ENCODE measurements at regions of chr5 and their contacts with region 1.

Region 1: GRCh38 chr5:90434116-90434714 is 24.7 kb upstream of the CETN3 start:
- DNase-seq: peak; percentile 6 to 63 (median 20)
- H3K4me3 ChIP-seq: no peak overlapping the region
- H3K4me3 Mint-ChIP-seq: no peak overlapping the region
- H3K27ac ChIP-seq: no peak overlapping the region
- H3K27ac Mint-ChIP-seq: no peak overlapping the region
- H3K4me1 ChIP-seq: no peaks in the 10 kb centered on the region
- H3K4me1 Mint-ChIP-seq: no peaks in the 10 kb centered on the region
- H3K27me3 ChIP-seq: no peaks in the 10 kb centered on the region
- H3K27me3 Mint-ChIP-seq: peaks cover 2 to 16% of the 10 kb centered on the region in 2 donors

Region 2: DNA sequence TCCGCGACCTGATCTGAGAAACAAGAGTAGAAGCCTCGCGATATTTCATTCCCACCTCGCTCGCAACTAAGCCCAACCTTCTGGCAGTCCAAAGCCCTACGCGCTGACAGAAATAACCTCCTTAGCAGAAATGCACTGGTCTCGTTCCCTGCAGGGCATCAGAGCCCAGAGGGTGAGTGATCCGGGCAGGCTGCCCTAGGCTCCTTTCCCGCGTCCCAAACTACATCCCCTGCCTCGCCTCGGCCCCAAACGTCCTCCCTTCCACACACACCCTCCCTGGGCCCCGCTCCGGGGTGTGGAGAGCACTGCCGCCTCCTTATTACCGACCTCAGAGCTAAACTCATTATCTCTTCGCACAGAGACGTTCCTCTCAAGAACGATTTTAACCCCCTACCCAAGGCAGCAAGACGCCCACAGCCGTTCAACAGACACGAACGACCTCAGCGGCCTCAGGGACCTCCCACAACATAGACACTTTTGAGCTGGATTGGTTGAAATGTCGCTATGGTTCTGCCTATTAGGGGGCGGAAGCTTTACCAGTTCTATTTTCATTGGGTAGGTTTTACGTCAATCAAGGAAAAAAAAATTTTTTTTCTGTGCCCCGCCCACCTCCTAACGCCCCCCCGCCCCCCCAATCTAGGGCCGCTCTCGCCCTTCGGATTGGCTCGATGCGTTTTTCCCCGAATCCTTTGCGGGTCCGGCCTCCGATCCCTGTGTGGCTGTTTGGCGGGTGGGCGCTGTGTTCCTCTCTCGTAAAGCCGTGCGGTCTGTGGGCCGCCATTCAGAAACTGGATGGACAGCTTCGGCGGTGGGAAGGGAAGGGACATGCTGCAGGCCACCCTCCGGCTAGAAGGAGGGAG is 24.7 kb before region 1 on chr5 and contains the start of gene CETN3:
- CTCF ChIA-PET with region 1: interaction called, 12 read pairs
- POLR2A ChIA-PET with region 1: no interaction called
- DNase-seq: peak; percentile 85 to 94 (median 89)
- H3K4me3 ChIP-seq: peak within 1 kb of the TSS; percentile 87
- H3K4me3 Mint-ChIP-seq: no peak within 1 kb of the TSS
- H3K27ac ChIP-seq: peak within 1 kb of the TSS; percentile 95
- H3K27ac Mint-ChIP-seq: no peak within 1 kb of the TSS
- H3K4me1 ChIP-seq: peaks cover 13% of the 10 kb centered on the region
- H3K4me1 Mint-ChIP-seq: peaks cover 14 to 21% (median 19%) of the 10 kb centered on the region in 3 donors
- H3K27me3 ChIP-seq: no peaks in the 10 kb centered on the region
- H3K27me3 Mint-ChIP-seq: no peaks in the 10 kb centered on the region
- total RNA-seq, gene CETN3: 41.0 to 41.6 TPM

Region 3: GRCh38 chr5:90529194-90529938 is 95.2 kb after region 1 on chr5 and contains the start of gene LYSMD3:
- CTCF ChIA-PET with region 1: interaction called, 59 read pairs
- POLR2A ChIA-PET with region 1: interaction called, 3 read pairs
- DNase-seq: peak; percentile 96 to 98 (median 97)
- H3K4me3 ChIP-seq: peak within 1 kb of the TSS; percentile 94
- H3K4me3 Mint-ChIP-seq: peak within 1 kb of the TSS; percentile 97 to 100 (median 99)
- H3K27ac ChIP-seq: peak within 1 kb of the TSS; percentile 98
- H3K27ac Mint-ChIP-seq: peak within 1 kb of the TSS; percentile 92 to 100 (median 98)
- H3K4me1 ChIP-seq: peaks cover 23% of the 10 kb centered on the region
- H3K4me1 Mint-ChIP-seq: peaks cover 32 to 45% (median 40%) of the 10 kb centered on the region in 3 donors
- H3K27me3 ChIP-seq: no peaks in the 10 kb centered on the region
- H3K27me3 Mint-ChIP-seq: peaks cover 6 to 21% of the 10 kb centered on the region in 2 donors
- total RNA-seq, gene LYSMD3: 17.0 TPM

Region 4: GRCh38 chr5:90783460-90784333 is 349.5 kb after region 1 on chr5:
- CTCF ChIA-PET with region 1: interaction called, 11 read pairs
- POLR2A ChIA-PET with region 1: no interaction called
- DNase-seq: peak; percentile 37 to 66 (median 55)
- H3K4me3 ChIP-seq: no peak overlapping the region
- H3K4me3 Mint-ChIP-seq: no peak overlapping the region
- H3K27ac ChIP-seq: no peak overlapping the region
- H3K27ac Mint-ChIP-seq: no peak overlapping the region
- H3K4me1 ChIP-seq: no peaks in the 10 kb centered on the region
- H3K4me1 Mint-ChIP-seq: no peaks in the 10 kb centered on the region
- H3K27me3 ChIP-seq: no peaks in the 10 kb centered on the region
- H3K27me3 Mint-ChIP-seq: peaks cover 3 to 6% of the 10 kb centered on the region in 2 donors

Measured in CD8-positive, alpha-beta memory T cell (primary cell).